ENCODE measurements at regions of chr13 and their contacts with region 1.

Region 1: GRCh38 chr13:37769078-37769477 is 100.5 kb downstream of the TRPC4 start:
- DNase-seq: peak; percentile 21
- ATAC-seq: no peak
- H3K4me3 ChIP-seq: no peak overlapping the region
- H3K27ac ChIP-seq: no peak overlapping the region
- H3K4me1 ChIP-seq: no peaks in the 10 kb centered on the region
- H3K27me3 ChIP-seq: peaks cover 25% of the 10 kb centered on the region; the same call in 1 of the 2 replicates
- CTCF ChIP-seq: peak; percentile 37

Region 2: DNA sequence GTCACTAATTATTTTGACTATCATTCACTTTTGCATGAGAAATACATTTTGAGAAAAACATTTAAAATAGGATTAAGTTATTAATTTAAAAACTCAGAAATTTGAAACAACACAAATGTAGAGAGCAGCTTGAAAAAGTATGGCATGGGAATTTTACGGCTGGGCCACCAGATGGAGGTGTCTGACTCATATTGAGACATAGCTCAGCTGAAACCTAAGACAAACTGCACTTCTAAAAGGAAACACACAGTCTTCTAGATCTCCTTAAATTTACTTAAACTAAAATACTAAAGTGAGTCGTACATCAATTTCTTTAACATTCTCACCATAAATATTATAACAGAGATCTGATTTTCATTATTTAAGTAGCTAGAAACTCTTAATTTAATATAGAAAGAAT is 128.6 kb before region 1 on chr13:
- CTCF ChIA-PET with region 1: no interaction called
- POLR2A ChIA-PET with region 1: no interaction called
- intact Hi-C with region 1: loop called (anchors 10 kb)
- DNase-seq: peak; percentile 58
- ATAC-seq: peak; percentile 80
- H3K4me3 ChIP-seq: no peak overlapping the region
- H3K27ac ChIP-seq: no peak overlapping the region
- H3K4me1 ChIP-seq: no peaks in the 10 kb centered on the region
- H3K27me3 ChIP-seq: peaks cover 18% of the 10 kb centered on the region
- CTCF ChIP-seq: peak; percentile 72

Region 3: DNA sequence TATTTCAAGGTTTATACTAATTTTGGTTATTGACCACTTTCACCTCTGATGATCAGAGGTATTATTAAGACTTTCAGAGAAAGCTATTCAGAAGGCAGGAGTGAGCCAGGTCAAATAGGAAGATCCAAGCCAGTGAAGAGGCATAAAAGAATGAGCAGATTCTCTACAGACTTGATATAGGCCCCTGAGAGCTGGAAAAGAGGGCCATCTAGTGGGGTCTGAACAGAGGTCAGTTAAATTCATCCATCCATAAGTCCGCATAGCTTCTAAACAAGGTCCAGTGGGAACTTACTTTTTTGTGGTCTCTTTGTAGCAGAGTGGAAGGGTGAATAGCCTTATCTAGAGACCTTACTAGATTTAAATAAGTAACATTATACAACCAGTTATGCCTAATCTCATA is 454.0 kb after region 1 on chr13:
- CTCF ChIA-PET with region 1: no interaction called
- POLR2A ChIA-PET with region 1: no interaction called
- intact Hi-C with region 1: loop called (anchors 10 kb)
- DNase-seq: peak; percentile 19
- ATAC-seq: no peak
- H3K4me3 ChIP-seq: no peak overlapping the region
- H3K27ac ChIP-seq: no peak overlapping the region
- H3K4me1 ChIP-seq: no peaks in the 10 kb centered on the region
- H3K27me3 ChIP-seq: no peaks in the 10 kb centered on the region
- CTCF ChIP-seq: peak; percentile 38; the same call in 1 of the 2 replicates

Region 4: GRCh38 chr13:38398711-38399493 is 629.8 kb after region 1 on chr13:
- CTCF ChIA-PET with region 1: no interaction called
- POLR2A ChIA-PET with region 1: no interaction called
- intact Hi-C with region 1: no loop called
- DNase-seq: peak; percentile 8
- ATAC-seq: no peak
- H3K4me3 ChIP-seq: no peak overlapping the region
- H3K27ac ChIP-seq: no peak overlapping the region
- H3K4me1 ChIP-seq: peaks cover 15% of the 10 kb centered on the region
- H3K27me3 ChIP-seq: no peaks in the 10 kb centered on the region
- CTCF ChIP-seq: no peak